Caco-2 (cell line): ENCODE measurements at regions of chr21 and their contacts with region 1.

Region 1: GRCh38 chr21:42790520-42791065 is 88.7 kb downstream of the WDR4 start:
- DNase-seq: no peak
- H3K4me3 ChIP-seq: no peak overlapping the region
- H3K4me3 Mint-ChIP-seq: no peak overlapping the region
- H3K27ac Mint-ChIP-seq: no peak overlapping the region
- H3K4me1 ChIP-seq: no peaks in the 10 kb centered on the region
- H3K4me1 Mint-ChIP-seq: no peaks in the 10 kb centered on the region
- H3K27me3 ChIP-seq: no peaks in the 10 kb centered on the region
- H3K27me3 Mint-ChIP-seq: no peaks in the 10 kb centered on the region
- CTCF ChIP-seq: no peak

Region 2: GRCh38 chr21:42614811-42615659 is 175.6 kb before region 1 on chr21:
- CTCF ChIA-PET with region 1: no interaction called
- POLR2A ChIA-PET with region 1: no interaction called
- intact Hi-C with region 1: no loop called
- DNase-seq: peak; percentile 70 to 87
- H3K4me3 ChIP-seq: no peak overlapping the region
- H3K4me3 Mint-ChIP-seq: no peak overlapping the region
- H3K27ac Mint-ChIP-seq: no peak overlapping the region
- H3K4me1 ChIP-seq: peaks cover 13% of the 10 kb centered on the region
- H3K4me1 Mint-ChIP-seq: no peaks in the 10 kb centered on the region
- H3K27me3 ChIP-seq: no peaks in the 10 kb centered on the region
- H3K27me3 Mint-ChIP-seq: no peaks in the 10 kb centered on the region
- CTCF ChIP-seq: no peak

Region 3: DNA sequence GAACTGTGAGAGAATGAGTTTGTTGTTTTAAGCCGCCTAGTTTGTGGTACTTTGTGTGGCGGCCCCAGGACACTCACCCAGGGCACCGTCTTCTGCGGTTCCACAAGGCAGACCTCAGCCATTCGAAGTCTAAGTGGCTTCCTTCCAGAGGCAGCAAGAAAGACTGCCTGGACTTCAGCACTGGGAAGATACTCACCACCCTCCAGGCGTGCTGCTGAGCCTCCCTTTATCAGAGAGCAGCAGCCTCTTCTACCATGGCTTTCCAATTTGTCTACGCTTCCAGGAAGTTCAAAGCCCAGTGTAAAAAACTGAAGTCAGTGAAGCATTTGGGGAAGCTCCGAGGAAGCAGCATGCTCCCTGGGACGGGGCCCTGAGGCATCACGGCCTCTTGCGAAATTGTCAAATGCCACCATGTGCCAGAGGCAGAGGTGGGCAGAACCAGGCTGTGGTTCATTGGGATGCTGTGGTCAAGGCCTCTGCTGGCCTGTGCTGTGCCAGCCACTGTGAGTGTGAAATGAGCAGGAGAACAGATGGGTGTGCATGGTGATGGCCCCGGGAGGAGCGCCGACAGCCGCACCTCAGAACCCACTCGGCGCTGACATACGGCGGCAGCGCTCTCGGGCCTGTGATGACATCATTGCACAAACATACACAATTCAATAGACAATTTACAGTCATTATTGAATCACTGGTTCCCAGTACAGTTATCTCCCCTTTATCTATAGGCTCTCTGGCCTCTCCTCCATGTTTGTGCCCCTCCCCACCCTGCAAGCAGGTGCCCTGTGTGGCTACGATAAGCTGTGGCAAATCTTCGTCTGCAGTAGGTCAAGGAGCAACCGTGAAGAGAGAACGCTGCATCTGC is 26.8 kb before region 1 on chr21:
- CTCF ChIA-PET with region 1: no interaction called
- POLR2A ChIA-PET with region 1: no interaction called
- intact Hi-C with region 1: loop called (anchors 1 kb)
- DNase-seq: no peak
- H3K4me3 ChIP-seq: no peak overlapping the region
- H3K4me3 Mint-ChIP-seq: no peak overlapping the region
- H3K27ac Mint-ChIP-seq: no peak overlapping the region
- H3K4me1 ChIP-seq: peaks cover 24% of the 10 kb centered on the region
- H3K4me1 Mint-ChIP-seq: peaks cover 18% of the 10 kb centered on the region
- H3K27me3 ChIP-seq: no peaks in the 10 kb centered on the region
- H3K27me3 Mint-ChIP-seq: no peaks in the 10 kb centered on the region
- CTCF ChIP-seq: no peak

Region 4: GRCh38 chr21:42833439-42833815 is 42.8 kb after region 1 on chr21:
- CTCF ChIA-PET with region 1: no interaction called
- POLR2A ChIA-PET with region 1: no interaction called
- intact Hi-C with region 1: loop called (anchors 5 kb)
- DNase-seq: peak; percentile 67 to 77
- H3K4me3 ChIP-seq: no peak overlapping the region
- H3K4me3 Mint-ChIP-seq: peak overlapping the region; percentile 22
- H3K27ac Mint-ChIP-seq: no peak overlapping the region
- H3K4me1 ChIP-seq: peaks cover 7% of the 10 kb centered on the region; the same call in 1 of the 2 replicates
- H3K4me1 Mint-ChIP-seq: peaks cover 16% of the 10 kb centered on the region
- H3K27me3 ChIP-seq: no peaks in the 10 kb centered on the region
- H3K27me3 Mint-ChIP-seq: no peaks in the 10 kb centered on the region
- CTCF ChIP-seq: peak; percentile 43 to 60

Region 5: GRCh38 chr21:43025636-43026307 is 235.2 kb after region 1 on chr21:
- CTCF ChIA-PET with region 1: no interaction called
- POLR2A ChIA-PET with region 1: no interaction called
- intact Hi-C with region 1: no loop called
- DNase-seq: no peak
- H3K4me3 ChIP-seq: no peak overlapping the region
- H3K4me3 Mint-ChIP-seq: no peak overlapping the region
- H3K27ac Mint-ChIP-seq: peak overlapping the region; percentile 55
- H3K4me1 ChIP-seq: peaks cover 10% of the 10 kb centered on the region; the same call in 1 of the 2 replicates
- H3K4me1 Mint-ChIP-seq: no peaks in the 10 kb centered on the region
- H3K27me3 ChIP-seq: no peaks in the 10 kb centered on the region
- H3K27me3 Mint-ChIP-seq: no peaks in the 10 kb centered on the region
- CTCF ChIP-seq: no peak